Aorta (tissue), 5 donors: ENCODE measurements at regions of chr3 and their contacts with region 1.

Region 1: DNA sequence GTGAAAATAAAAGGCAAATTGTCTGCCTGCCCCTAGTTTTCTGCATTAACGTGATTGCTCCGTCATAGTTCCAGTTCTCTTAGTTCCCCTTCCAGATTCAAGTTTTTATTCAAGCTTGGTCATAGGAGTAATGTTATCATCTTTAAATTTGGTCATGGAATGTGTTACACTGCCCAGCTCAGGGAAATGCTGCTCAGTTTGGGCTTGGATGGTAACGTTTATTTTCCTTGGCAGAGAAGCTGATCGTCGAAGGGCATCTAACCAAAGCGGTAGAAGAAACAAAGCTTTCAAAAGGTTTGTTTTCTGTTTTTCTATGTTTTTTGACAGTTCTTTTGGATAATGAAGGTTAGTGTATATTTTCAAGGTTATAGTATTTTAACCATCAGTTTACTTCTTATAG is 118.4 kb upstream of the FLNB start:
- DNase-seq: no peak
- ATAC-seq: peak; percentile 88
- H3K4me3 ChIP-seq: peak overlapping the region in 1 of 2 donors; percentile 54
- H3K27ac ChIP-seq: no peak overlapping the region
- H3K4me1 ChIP-seq: peaks cover 0 to 2% of the 10 kb centered on the region in 2 donors
- H3K27me3 ChIP-seq: no peaks in the 10 kb centered on the region

Region 2: DNA sequence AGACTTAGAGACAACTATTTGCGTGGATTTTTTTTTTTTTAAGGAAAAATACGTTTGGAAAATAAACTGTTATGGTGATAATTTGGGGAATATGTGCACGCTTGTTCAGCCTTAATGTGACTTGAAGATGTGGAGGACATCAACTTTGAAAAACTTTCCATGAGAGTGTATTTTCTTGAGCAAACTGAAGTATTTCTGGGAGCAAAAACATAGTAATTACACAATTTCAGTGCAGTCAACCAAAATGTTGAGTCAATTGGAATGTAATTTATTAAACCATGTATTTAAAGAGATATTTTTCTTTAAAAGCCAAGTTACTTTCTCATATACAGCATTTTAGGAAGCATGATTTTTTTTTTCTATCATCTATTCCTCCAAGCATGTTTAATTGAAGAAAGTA is 38.1 kb after region 1 on chr3:
- intact Hi-C with region 1: loop called in 1 of 2 experiments (anchors 5 kb)
- DNase-seq: no peak
- ATAC-seq: no peak
- H3K4me3 ChIP-seq: no peak overlapping the region
- H3K27ac ChIP-seq: no peak overlapping the region
- H3K4me1 ChIP-seq: peaks cover 3% of the 10 kb centered on the region in 2 donors
- H3K27me3 ChIP-seq: no peaks in the 10 kb centered on the region